Activated CD8-positive, alpha-beta T cell treated with anti-CD3 and anti-CD28 coated beads, Interleukin-2, amount 10 ng/mL, durations not matched to agents 7 days and 5 days (primary cell): ENCODE measurements at regions of chr7 and their contacts with region 1.

Region 1: GRCh38 chr7:77651573-77652162 is 44.6 kb upstream of the RSBN1L start:
- DNase-seq: peak; percentile 63
- ATAC-seq: no peak
- H3K4me3 Mint-ChIP-seq: no peak overlapping the region
- H3K27ac Mint-ChIP-seq: no peak overlapping the region
- H3K4me1 Mint-ChIP-seq: no peaks in the 10 kb centered on the region
- H3K27me3 Mint-ChIP-seq: no peaks in the 10 kb centered on the region

Region 2: GRCh38 chr7:77631820-77632219 is 19.8 kb before region 1 on chr7:
- CTCF ChIA-PET with region 1: interaction called, 13 read pairs
- POLR2A ChIA-PET with region 1: no interaction called
- DNase-seq: no peak
- ATAC-seq: no peak
- H3K4me3 Mint-ChIP-seq: no peak overlapping the region
- H3K27ac Mint-ChIP-seq: no peak overlapping the region
- H3K4me1 Mint-ChIP-seq: no peaks in the 10 kb centered on the region
- H3K27me3 Mint-ChIP-seq: no peaks in the 10 kb centered on the region

Region 3: GRCh38 chr7:77674878-77675277 is 23.2 kb after region 1 on chr7:
- CTCF ChIA-PET with region 1: interaction called, 18 read pairs
- POLR2A ChIA-PET with region 1: interaction called, 3 read pairs
- DNase-seq: no peak
- ATAC-seq: no peak
- H3K4me3 Mint-ChIP-seq: no peak overlapping the region
- H3K27ac Mint-ChIP-seq: no peak overlapping the region
- H3K4me1 Mint-ChIP-seq: no peaks in the 10 kb centered on the region
- H3K27me3 Mint-ChIP-seq: no peaks in the 10 kb centered on the region

Region 4: DNA sequence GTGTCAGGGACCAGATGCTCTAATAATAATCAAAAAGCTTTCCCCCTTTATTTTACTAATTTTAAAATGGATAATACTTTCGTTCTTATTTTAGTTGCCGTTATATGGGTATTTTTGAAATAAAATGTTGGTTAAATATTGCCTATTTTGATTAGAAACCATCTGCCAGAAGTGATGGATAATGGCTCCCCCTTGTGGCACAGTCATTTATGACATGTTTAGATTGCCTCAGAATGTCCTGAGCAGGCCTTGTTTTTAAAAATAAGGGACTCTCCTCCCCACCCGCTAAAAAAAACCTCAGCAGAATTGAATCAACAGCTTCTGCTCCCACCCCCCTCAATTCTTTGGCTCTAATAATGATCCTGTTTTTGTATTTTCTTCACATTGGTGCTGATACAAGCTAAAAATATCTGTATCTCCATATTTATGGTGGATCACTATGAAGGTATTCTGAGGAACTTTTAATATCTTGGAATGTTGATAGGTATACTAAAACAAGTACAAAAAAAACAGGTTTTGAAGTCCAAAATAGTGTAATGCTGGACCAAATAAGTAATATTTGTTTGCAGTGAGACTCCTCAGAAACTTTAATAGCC is 107.7 kb after region 1 on chr7:
- CTCF ChIA-PET with region 1: interaction called, 126 read pairs
- POLR2A ChIA-PET with region 1: interaction called, 3 read pairs
- DNase-seq: peak; percentile 81
- ATAC-seq: peak; percentile 76
- H3K4me3 Mint-ChIP-seq: no peak overlapping the region
- H3K27ac Mint-ChIP-seq: no peak overlapping the region
- H3K4me1 Mint-ChIP-seq: peaks cover 15% of the 10 kb centered on the region
- H3K27me3 Mint-ChIP-seq: no peaks in the 10 kb centered on the region

Region 5: DNA sequence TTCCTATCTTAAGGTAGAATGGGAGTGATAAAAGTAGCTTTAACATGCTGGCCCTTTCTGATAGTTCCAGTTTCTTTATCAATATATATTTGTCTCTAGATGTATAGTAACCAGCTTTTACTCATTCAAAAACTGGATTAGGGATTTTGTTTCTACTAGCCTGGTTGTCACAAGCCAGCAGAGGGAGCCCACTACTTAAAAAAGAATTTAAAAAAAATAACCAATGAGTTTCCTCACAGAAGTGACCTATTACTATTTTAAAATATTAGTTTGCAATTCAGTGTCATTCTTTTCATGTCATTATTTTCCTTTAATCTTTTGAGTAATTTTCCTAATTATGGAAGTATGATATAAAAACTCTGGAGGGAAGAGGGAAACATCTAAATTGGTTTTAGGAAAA is 289.0 kb after region 1 on chr7:
- CTCF ChIA-PET with region 1: interaction called, 20 read pairs
- POLR2A ChIA-PET with region 1: no interaction called
- DNase-seq: peak; percentile 24
- ATAC-seq: no peak
- H3K4me3 Mint-ChIP-seq: no peak overlapping the region
- H3K27ac Mint-ChIP-seq: no peak overlapping the region
- H3K4me1 Mint-ChIP-seq: peaks cover 7% of the 10 kb centered on the region
- H3K27me3 Mint-ChIP-seq: no peaks in the 10 kb centered on the region